Mammary epithelial cell (primary cell): ENCODE measurements at regions of chr12 and their contacts with region 1.

Region 1: GRCh38 chr12:45130881-45131281 is 80.0 kb upstream of the DBX2 start:
- DNase-seq: peak; percentile 68
- H3K4me3 ChIP-seq: no peak overlapping the region
- H3K27ac ChIP-seq: no peak overlapping the region
- H3K4me1 ChIP-seq: no peaks in the 10 kb centered on the region
- H3K27me3 ChIP-seq: peaks cover 3% of the 10 kb centered on the region
- CTCF ChIP-seq: peak; percentile 77 to 80

Region 2: DNA sequence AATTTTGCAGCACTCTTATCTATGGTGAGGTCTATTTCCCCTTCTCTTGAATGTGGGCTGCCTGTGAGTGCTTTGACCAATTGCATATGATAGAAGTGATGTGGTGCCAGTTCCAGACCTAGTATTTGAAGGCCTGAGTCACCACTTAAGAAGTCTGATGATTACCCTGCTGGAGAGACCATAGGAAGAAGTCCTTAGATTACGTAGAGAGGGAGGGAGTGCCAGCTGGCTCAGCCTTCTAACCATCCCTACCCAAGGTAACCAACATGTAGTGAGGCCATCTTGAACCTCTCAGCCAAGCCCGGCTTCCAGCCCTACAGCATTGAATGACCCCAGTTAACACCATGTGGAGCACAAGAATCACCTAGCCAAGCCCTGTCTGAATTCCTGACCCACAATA is 421.7 kb before region 1 on chr12:
- CTCF ChIA-PET with region 1: no interaction called
- dilution Hi-C with region 1: no loop called
- in situ Hi-C with region 1: no loop called
- intact Hi-C with region 1: no loop called
- DNase-seq: no peak
- H3K4me3 ChIP-seq: no peak overlapping the region
- H3K27ac ChIP-seq: no peak overlapping the region
- H3K4me1 ChIP-seq: no peaks in the 10 kb centered on the region
- H3K27me3 ChIP-seq: peaks cover 4% of the 10 kb centered on the region
- CTCF ChIP-seq: no peak

Region 3: GRCh38 chr12:46005151-46005797 is 874.4 kb after region 1 on chr12:
- CTCF ChIA-PET with region 1: no interaction called
- dilution Hi-C with region 1: no loop called
- in situ Hi-C with region 1: no loop called
- intact Hi-C with region 1: loop called (anchors 5 kb)
- DNase-seq: no peak
- H3K4me3 ChIP-seq: no peak overlapping the region
- H3K27ac ChIP-seq: no peak overlapping the region
- H3K4me1 ChIP-seq: no peaks in the 10 kb centered on the region
- H3K27me3 ChIP-seq: no peaks in the 10 kb centered on the region
- CTCF ChIP-seq: peak; percentile 35 to 41